ENCODE measurements at regions of chr16 and their contacts with region 1.

Region 1: GRCh38 chr16:65671-66137 is 6.7 kb downstream of the RHBDF1 start:
- DNase-seq: peak; percentile 89
- ATAC-seq: peak; percentile 92
- H3K4me3 Mint-ChIP-seq: no peak overlapping the region
- H3K27ac Mint-ChIP-seq: no peak overlapping the region
- H3K4me1 Mint-ChIP-seq: no peaks in the 10 kb centered on the region
- H3K27me3 Mint-ChIP-seq: peaks cover 8% of the 10 kb centered on the region

Region 2: GRCh38 chr16:53346-54236 is 12.1 kb before region 1 on chr16 and contains the starts of genes POLR3K and SNRNP25:
- CTCF ChIA-PET with region 1: interaction called, 19 read pairs
- DNase-seq: peak; percentile 99
- ATAC-seq: peak; percentile 98
- H3K4me3 Mint-ChIP-seq: peak within 1 kb of the TSS; percentile 93
- H3K27ac Mint-ChIP-seq: peak within 1 kb of the TSS; percentile 89
- H3K4me1 Mint-ChIP-seq: peaks cover 30% of the 10 kb centered on the region
- H3K27me3 Mint-ChIP-seq: no peaks in the 10 kb centered on the region
- total RNA-seq, gene POLR3K: 40.4 to 53.1 TPM
- total RNA-seq, gene SNRNP25: 86.6 to 90.8 TPM

Region 3: DNA sequence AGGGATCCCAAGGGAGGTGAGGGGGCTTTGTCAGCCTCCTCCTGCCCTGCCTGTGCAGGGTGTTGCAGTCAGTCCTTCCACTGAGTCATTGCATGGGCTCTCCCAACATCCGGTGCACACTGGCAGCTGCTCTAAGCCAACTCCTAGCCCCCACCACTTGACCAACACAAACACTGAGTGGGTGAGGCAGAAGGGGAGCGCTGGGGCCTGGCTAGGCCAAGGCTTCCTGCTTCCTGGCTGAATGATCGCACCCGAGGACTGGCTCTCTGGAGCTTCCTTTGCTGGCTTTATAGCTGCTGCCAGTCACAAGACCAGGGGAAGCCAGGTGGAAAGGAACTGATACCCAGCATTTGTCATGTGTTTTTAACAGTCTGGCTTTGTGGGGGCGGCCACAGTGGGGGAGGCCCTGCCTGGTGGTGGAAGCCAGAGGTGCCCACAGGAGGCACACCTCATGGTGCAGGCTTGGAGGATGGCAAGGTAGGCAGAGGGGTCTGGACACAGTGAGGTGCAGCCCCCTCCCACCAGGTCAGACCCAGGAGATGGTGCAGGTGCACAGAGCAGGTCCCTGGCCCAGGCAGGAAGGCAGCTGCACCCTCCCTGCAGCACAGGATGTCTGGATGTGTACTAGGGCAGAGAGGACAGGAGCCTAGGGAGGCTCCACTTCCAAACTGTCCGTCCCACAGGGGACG is 19.2 kb after region 1 on chr16:
- CTCF ChIA-PET with region 1: interaction called, 78 read pairs
- DNase-seq: peak; percentile 89
- ATAC-seq: peak; percentile 86
- H3K4me3 Mint-ChIP-seq: no peak overlapping the region
- H3K27ac Mint-ChIP-seq: peak overlapping the region; percentile 92
- H3K4me1 Mint-ChIP-seq: peaks cover 25% of the 10 kb centered on the region
- H3K27me3 Mint-ChIP-seq: no peaks in the 10 kb centered on the region

Region 4: GRCh38 chr16:96935-97381 is 31.3 kb after region 1 on chr16:
- CTCF ChIA-PET with region 1: interaction called, 350 read pairs
- DNase-seq: peak; percentile 93
- ATAC-seq: peak; percentile 97
- H3K4me3 Mint-ChIP-seq: no peak overlapping the region
- H3K27ac Mint-ChIP-seq: peak overlapping the region; percentile 5
- H3K4me1 Mint-ChIP-seq: peaks cover 4% of the 10 kb centered on the region
- H3K27me3 Mint-ChIP-seq: no peaks in the 10 kb centered on the region

Region 5: DNA sequence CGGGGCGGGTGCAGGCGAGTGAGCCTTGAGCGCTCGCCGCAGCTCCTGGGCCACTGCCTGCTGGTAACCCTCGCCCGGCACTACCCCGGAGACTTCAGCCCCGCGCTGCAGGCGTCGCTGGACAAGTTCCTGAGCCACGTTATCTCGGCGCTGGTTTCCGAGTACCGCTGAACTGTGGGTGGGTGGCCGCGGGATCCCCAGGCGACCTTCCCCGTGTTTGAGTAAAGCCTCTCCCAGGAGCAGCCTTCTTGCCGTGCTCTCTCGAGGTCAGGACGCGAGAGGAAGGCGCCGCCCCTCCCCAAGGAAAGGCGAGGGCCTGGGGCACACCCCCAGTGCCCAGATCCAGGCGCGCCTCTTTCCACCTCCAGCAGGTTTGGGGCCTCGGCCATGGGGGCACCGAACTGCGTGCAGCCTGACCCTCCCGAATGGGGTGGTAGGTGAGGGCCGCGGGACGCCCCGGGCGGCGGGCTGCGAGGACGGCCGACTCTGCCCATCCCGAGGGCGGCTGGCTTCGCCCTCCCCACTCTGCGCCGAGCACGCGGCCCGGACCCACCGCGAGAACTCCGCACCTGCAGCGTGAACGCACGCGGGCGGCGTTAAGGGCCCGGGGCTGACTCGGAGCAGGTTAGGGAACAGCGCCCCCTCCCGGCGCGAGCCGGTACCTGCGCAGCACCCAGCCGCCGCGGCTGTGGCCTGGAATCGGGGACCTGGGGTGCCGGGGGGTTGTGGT is 115.4 kb after region 1 on chr16:
- CTCF ChIA-PET with region 1: interaction called, 12 read pairs
- DNase-seq: peak; percentile 85
- ATAC-seq: peak; percentile 86
- H3K4me3 Mint-ChIP-seq: no peak overlapping the region
- H3K27ac Mint-ChIP-seq: no peak overlapping the region
- H3K4me1 Mint-ChIP-seq: peaks cover 7% of the 10 kb centered on the region
- H3K27me3 Mint-ChIP-seq: peaks cover 30% of the 10 kb centered on the region

Region 6: GRCh38 chr16:425082-425718 is 359.5 kb after region 1 on chr16 and contains the start of gene RAB11FIP3:
- CTCF ChIA-PET with region 1: no interaction called
- DNase-seq: peak; percentile 87
- ATAC-seq: peak; percentile 94
- H3K4me3 Mint-ChIP-seq: peak within 1 kb of the TSS; percentile 74
- H3K27ac Mint-ChIP-seq: peak within 1 kb of the TSS; percentile 81
- H3K4me1 Mint-ChIP-seq: peaks cover 25% of the 10 kb centered on the region
- H3K27me3 Mint-ChIP-seq: peaks cover 11% of the 10 kb centered on the region
- total RNA-seq, gene RAB11FIP3: 25.9 to 32.1 TPM

Region 7: DNA sequence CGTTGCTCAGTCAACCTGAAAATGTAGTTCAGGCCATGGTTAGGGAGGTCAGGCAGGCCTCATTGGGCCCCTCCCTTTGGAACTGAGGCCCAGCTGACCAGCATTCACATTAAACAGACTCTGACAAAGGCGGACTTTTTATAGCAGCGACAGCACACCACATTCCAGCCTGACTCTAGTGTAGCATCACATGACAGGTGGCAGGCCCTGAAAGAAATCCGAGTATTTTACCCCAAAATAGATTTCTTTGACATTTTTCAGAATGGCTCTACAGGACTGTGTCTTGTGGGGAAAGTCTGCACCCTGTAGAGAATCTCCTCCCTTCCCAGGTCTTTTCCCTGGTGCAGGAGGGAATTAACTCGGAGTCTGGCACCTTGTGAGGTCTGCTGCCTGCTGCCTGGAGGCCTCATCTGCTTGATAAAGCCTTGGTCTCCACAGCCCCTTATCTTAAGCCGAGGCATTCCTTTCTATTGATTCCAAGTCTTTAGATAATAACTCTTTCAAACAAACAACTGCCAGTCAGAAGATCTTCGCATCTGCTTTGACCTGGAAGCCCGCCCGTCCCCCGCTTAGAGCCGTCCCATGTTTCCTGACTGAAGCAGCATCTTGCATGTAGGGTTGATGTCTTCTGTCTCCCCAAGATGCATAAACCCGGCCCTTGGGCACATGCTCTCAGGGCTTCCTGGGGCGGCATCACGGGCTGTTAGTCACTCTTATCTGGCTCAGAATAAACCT is 417.8 kb after region 1 on chr16:
- CTCF ChIA-PET with region 1: no interaction called
- DNase-seq: no peak
- ATAC-seq: no peak
- H3K4me3 Mint-ChIP-seq: no peak overlapping the region
- H3K27ac Mint-ChIP-seq: no peak overlapping the region
- H3K4me1 Mint-ChIP-seq: no peaks in the 10 kb centered on the region
- H3K27me3 Mint-ChIP-seq: no peaks in the 10 kb centered on the region

Measured in activated CD8-positive, alpha-beta memory T cell treated with anti-CD3 and anti-CD28 coated beads, Interleukin-2, amount 10 ng/mL, durations not matched to agents 7 days and 5 days (primary cell).